CD8-positive, alpha-beta memory T cell (primary cell): ENCODE measurements at regions of chr3 and their contacts with region 1.

Region 1: GRCh38 chr3:138174421-138175122 is at the start of gene DBR1:
- DNase-seq: peak; percentile 58 to 85 (median 80)
- H3K4me3 ChIP-seq: peak within 1 kb of the TSS; percentile 94
- H3K4me3 Mint-ChIP-seq: peak within 1 kb of the TSS; percentile 94 to 99 (median 99)
- H3K27ac ChIP-seq: peak within 1 kb of the TSS; percentile 80
- H3K27ac Mint-ChIP-seq: peak within 1 kb of the TSS; percentile 93 to 98 (median 96)
- H3K4me1 ChIP-seq: peaks cover 26% of the 10 kb centered on the region
- H3K4me1 Mint-ChIP-seq: peaks cover 41 to 51% (median 46%) of the 10 kb centered on the region in 3 donors
- H3K27me3 ChIP-seq: no peaks in the 10 kb centered on the region
- H3K27me3 Mint-ChIP-seq: peaks cover 0 to 2% of the 10 kb centered on the region in 2 donors
- total RNA-seq, gene DBR1: 25.6 to 29.0 TPM

Region 2: GRCh38 chr3:138186803-138187295 is 12.3 kb after region 1 on chr3:
- CTCF ChIA-PET with region 1: interaction called, 14 read pairs
- POLR2A ChIA-PET with region 1: interaction called, 24 read pairs
- DNase-seq: peak; percentile 83 to 92 (median 87)
- H3K4me3 ChIP-seq: peak overlapping the region; percentile 75
- H3K4me3 Mint-ChIP-seq: peak overlapping the region; percentile 93 to 99 (median 97)
- H3K27ac ChIP-seq: peak overlapping the region; percentile 94
- H3K27ac Mint-ChIP-seq: peak overlapping the region; percentile 87 to 98 (median 96)
- H3K4me1 ChIP-seq: peaks cover 30% of the 10 kb centered on the region
- H3K4me1 Mint-ChIP-seq: peaks cover 36 to 50% (median 47%) of the 10 kb centered on the region in 3 donors
- H3K27me3 ChIP-seq: peaks cover 5% of the 10 kb centered on the region
- H3K27me3 Mint-ChIP-seq: peaks cover 9 to 14% of the 10 kb centered on the region in 2 donors